Calu3 (cell line): ENCODE measurements at regions of chr4 and their contacts with region 1.

Region 1: GRCh38 chr4:168098257-168098717 is 6.0 kb downstream of the ANXA10 start:
- DNase-seq: no peak
- H3K4me3 Mint-ChIP-seq: no peak overlapping the region
- H3K27ac Mint-ChIP-seq: peak overlapping the region; percentile 78
- H3K4me1 Mint-ChIP-seq: peaks cover 31% of the 10 kb centered on the region
- H3K27me3 Mint-ChIP-seq: no peaks in the 10 kb centered on the region
- CTCF ChIP-seq: no peak

Region 2: DNA sequence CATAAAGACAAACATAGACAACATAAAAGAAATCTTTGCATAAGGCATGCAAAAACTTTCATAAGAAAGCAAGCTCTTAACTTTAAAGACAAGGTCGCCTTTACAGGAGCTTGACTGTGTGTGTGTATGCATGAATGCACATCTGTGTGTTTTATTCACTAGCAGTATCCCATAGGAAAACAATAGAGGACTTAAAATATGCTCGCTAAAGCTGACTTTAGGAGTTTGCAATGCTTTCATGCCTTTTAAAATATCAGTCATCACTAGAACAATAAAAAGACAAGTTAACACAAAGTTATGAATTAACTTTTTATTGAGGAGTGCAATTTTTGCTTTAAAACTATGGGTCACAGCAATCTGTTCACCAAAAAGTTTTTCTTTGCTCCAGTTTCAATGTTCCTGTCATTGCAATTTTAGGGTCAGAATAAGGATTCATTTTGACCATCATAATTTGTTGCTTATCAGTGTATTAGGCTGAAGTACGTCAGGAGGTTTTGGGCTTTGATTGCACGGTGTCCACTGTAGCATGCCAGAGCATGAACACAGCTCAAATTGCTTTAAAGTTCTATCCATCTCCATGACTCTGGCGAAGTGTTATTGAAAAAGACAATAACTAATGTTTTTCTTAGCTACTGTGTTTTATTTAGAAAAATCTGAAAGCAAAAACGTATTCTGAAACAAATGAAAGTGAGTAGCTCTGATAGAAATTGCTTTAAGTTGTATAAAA is 30.9 kb after region 1 on chr4:
- CTCF ChIA-PET with region 1: no interaction called
- intact Hi-C with region 1: loop called (anchors 2 kb)
- DNase-seq: no peak
- H3K4me3 Mint-ChIP-seq: no peak overlapping the region
- H3K27ac Mint-ChIP-seq: no peak overlapping the region
- H3K4me1 Mint-ChIP-seq: peaks cover 30% of the 10 kb centered on the region
- H3K27me3 Mint-ChIP-seq: no peaks in the 10 kb centered on the region
- CTCF ChIP-seq: no peak